ENCODE measurements at regions of chr11 and their contacts with region 1.

Region 1: GRCh38 chr11:74726547-74727182 is 4.6 kb downstream of the CHRDL2 start:
- DNase-seq: peak; percentile 73
- H3K4me3 Mint-ChIP-seq: no peak overlapping the region
- H3K27ac Mint-ChIP-seq: no peak overlapping the region
- H3K4me1 Mint-ChIP-seq: peaks cover 6% of the 10 kb centered on the region
- H3K27me3 Mint-ChIP-seq: peaks cover 23% of the 10 kb centered on the region

Region 2: GRCh38 chr11:74710281-74710938 is 16.3 kb before region 1 on chr11:
- CTCF ChIA-PET with region 1: interaction called, 15 read pairs
- POLR2A ChIA-PET with region 1: no interaction called
- intact Hi-C with region 1: no loop called
- DNase-seq: no peak
- H3K4me3 Mint-ChIP-seq: no peak overlapping the region
- H3K27ac Mint-ChIP-seq: no peak overlapping the region
- H3K4me1 Mint-ChIP-seq: peaks cover 7% of the 10 kb centered on the region
- H3K27me3 Mint-ChIP-seq: no peaks in the 10 kb centered on the region

Region 3: GRCh38 chr11:74739546-74740270 is 13.0 kb after region 1 on chr11:
- CTCF ChIA-PET with region 1: interaction called, 26 read pairs
- POLR2A ChIA-PET with region 1: no interaction called
- intact Hi-C with region 1: no loop called
- DNase-seq: peak; percentile 57
- H3K4me3 Mint-ChIP-seq: no peak overlapping the region
- H3K27ac Mint-ChIP-seq: no peak overlapping the region
- H3K4me1 Mint-ChIP-seq: peaks cover 12% of the 10 kb centered on the region
- H3K27me3 Mint-ChIP-seq: peaks cover 15% of the 10 kb centered on the region

Measured in activated CD4-positive, alpha-beta memory T cell treated with anti-CD3 and anti-CD28 coated beads for 36 hours (primary cell).